ENCODE measurements at regions of chr16 and their contacts with region 1.

Region 1: DNA sequence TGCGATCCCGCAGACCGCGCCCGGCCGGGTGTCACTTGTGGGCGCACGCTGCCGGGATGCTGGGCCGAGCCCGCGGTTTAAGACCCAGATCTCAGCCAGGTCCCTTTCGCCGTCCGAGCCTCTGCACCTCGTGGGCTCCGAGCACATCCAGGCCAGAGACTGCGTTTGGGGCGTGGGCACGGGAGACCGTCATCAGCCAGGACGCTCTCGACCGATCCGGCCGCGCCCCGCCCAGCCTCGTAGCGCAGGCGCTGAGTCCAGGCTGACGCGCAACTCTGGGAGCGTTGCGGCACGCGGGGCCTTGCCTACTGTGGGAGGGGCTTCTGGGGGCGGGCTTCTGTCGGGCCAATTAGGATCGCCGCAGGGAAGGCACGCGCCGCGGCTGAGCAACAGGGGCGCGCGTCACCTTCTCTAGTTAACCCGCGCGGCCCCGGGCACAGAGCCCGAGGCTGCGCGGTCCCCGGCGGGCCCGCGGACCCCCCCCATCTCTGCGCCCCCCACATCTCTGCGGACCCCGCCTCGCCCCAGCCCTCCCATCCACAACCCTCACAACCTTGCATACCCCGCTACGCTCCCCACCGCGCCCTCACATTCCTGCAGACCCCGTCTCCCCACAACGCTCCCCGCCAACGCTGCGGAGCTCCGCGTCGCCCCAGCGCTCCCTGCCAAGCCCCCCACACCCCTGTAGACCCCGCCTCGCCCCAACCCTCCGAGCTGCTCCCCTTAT is 722 bp upstream of the CEMP1 start:
- DNase-seq: peak; percentile 91 to 99
- H3K4me3 ChIP-seq: peak overlapping the region; percentile 57
- H3K27ac ChIP-seq: peak overlapping the region; percentile 38
- H3K4me1 ChIP-seq: peaks cover 18% of the 10 kb centered on the region; the same call in 1 of the 2 replicates
- H3K27me3 ChIP-seq: no peaks in the 10 kb centered on the region
- CTCF ChIP-seq: no peak

Region 2: GRCh38 chr16:1439058-1439698 is 1092.8 kb before region 1 on chr16:
- CTCF ChIA-PET with region 1: interaction called, 12 read pairs
- POLR2A ChIA-PET with region 1: no interaction called
- intact Hi-C with region 1: no loop called
- DNase-seq: no peak
- H3K4me3 ChIP-seq: no peak overlapping the region
- H3K27ac ChIP-seq: no peak overlapping the region
- H3K4me1 ChIP-seq: no peaks in the 10 kb centered on the region
- H3K27me3 ChIP-seq: no peaks in the 10 kb centered on the region
- CTCF ChIP-seq: no peak

Region 3: GRCh38 chr16:2213817-2214720 is 317.9 kb before region 1 on chr16:
- CTCF ChIA-PET with region 1: no interaction called
- POLR2A ChIA-PET with region 1: interaction called, 16 read pairs
- intact Hi-C with region 1: no loop called
- DNase-seq: no peak
- H3K4me3 ChIP-seq: peak overlapping the region; percentile 85
- H3K27ac ChIP-seq: no peak overlapping the region
- H3K4me1 ChIP-seq: peaks cover 28% of the 10 kb centered on the region
- H3K27me3 ChIP-seq: no peaks in the 10 kb centered on the region
- CTCF ChIP-seq: no peak

Region 4: GRCh38 chr16:2223375-2224182 is 308.4 kb before region 1 on chr16 and contains the start of gene E4F1:
- CTCF ChIA-PET with region 1: no interaction called
- POLR2A ChIA-PET with region 1: interaction called, 17 read pairs
- intact Hi-C with region 1: no loop called
- DNase-seq: peak; percentile 96 to 100
- H3K4me3 ChIP-seq: peak within 1 kb of the TSS; percentile 83
- H3K27ac ChIP-seq: peak within 1 kb of the TSS; percentile 24
- H3K4me1 ChIP-seq: peaks cover 20% of the 10 kb centered on the region
- H3K27me3 ChIP-seq: no peaks in the 10 kb centered on the region
- CTCF ChIP-seq: no peak
- total RNA-seq, gene E4F1: 38.8 and 41.1 TPM in 2 replicates

Region 5: DNA sequence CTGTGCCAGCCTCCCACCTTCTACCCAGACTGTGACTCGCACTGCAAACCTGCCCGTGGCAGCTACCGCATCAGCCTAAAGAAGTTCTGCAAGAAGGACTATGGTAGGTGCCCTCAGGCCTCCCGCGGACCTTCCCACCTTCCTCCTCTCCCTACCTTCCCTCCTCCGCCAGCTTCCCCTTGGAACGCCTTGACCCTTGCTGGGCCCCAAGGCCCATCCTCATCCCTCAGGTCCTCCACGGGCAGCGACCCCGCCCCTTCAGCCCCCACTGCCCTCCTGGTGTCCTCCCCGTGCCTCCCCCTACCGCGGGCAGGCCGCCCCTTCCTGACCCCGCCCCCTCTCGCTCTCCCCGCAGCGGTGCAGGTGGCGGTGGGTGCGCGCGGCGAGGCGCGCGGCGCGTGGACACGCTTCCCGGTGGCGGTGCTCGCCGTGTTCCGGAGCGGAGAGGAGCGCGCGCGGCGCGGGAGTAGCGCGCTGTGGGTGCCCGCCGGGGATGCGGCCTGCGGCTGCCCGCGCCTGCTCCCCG is 58.5 kb before region 1 on chr16:
- CTCF ChIA-PET with region 1: no interaction called
- POLR2A ChIA-PET with region 1: interaction called, 18 read pairs
- intact Hi-C with region 1: no loop called
- DNase-seq: peak; percentile 43 to 48
- H3K4me3 ChIP-seq: peak overlapping the region; percentile 98; the same call in 1 of the 2 replicates
- H3K27ac ChIP-seq: no peak overlapping the region
- H3K4me1 ChIP-seq: peaks cover 22% of the 10 kb centered on the region; the same call in 1 of the 2 replicates
- H3K27me3 ChIP-seq: no peaks in the 10 kb centered on the region
- CTCF ChIP-seq: no peak

Region 6: GRCh38 chr16:2507052-2507659 is 24.8 kb before region 1 on chr16:
- CTCF ChIA-PET with region 1: no interaction called
- POLR2A ChIA-PET with region 1: no interaction called
- intact Hi-C with region 1: no loop called
- DNase-seq: no peak
- H3K4me3 ChIP-seq: no peak overlapping the region
- H3K27ac ChIP-seq: no peak overlapping the region
- H3K4me1 ChIP-seq: 0 out of 2 replicates have a peak, but pooled peaks cover 5% of the 10 kb centered on the region
- H3K27me3 ChIP-seq: no peaks in the 10 kb centered on the region
- CTCF ChIP-seq: no peak

Region 7: DNA sequence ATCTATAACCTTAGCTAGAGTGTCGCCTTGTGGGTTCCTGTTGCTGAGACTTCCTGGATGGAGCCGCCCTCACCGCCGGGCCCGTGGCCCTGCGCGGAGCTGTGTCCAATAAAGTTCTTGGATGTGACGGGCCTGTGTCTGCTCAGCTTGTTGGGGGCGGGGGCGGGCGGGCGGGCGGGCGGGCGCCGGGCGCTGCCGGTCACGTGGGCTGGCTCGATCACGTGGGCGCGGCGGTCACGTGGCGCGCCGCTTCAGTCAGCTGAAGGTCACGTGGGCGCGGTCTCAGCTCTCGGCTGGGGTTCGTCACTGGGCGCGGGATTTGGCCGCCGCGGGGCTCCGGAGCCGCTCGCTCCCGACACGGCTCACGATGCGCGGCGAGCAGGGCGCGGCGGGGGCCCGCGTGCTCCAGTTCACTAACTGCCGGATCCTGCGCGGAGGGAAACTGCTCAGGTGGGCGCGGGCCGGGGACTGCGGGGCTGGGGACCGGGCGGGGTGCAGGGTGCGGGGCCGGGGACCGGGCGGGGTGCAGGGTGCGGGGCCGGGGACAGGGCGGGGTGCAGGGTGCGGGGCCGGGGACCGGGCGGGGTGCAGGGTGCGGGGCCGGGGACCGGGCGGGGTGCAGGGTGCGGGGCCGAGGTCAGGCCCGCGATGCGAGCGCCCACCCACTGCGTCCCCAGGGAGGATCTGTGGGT is 11.7 kb before region 1 on chr16 and contains the start of gene AMDHD2:
- CTCF ChIA-PET with region 1: interaction called, 5 read pairs
- POLR2A ChIA-PET with region 1: interaction called, 16 read pairs
- intact Hi-C with region 1: no loop called
- DNase-seq: peak; percentile 73 to 88
- H3K4me3 ChIP-seq: peak within 1 kb of the TSS; percentile 58
- H3K27ac ChIP-seq: no peak within 1 kb of the TSS
- H3K4me1 ChIP-seq: peaks cover 33% of the 10 kb centered on the region; the same call in 1 of the 2 replicates
- H3K27me3 ChIP-seq: no peaks in the 10 kb centered on the region
- CTCF ChIP-seq: no peak
- total RNA-seq, gene AMDHD2: 47.9 and 61.5 TPM in 2 replicates

Measured in PC-9 (cell line).